Breast epithelium (tissue), 4 donors: ENCODE measurements at regions of chrX and their contacts with region 1.

Region 1: GRCh38 chrX:125295337-125295736 is 24.3 kb upstream of the TEX13C start:
- DNase-seq: no peak
- H3K4me3 ChIP-seq: no peak overlapping the region
- H3K27ac ChIP-seq: no peak overlapping the region
- H3K4me1 ChIP-seq: no peaks in the 10 kb centered on the region
- H3K27me3 ChIP-seq: no peaks in the 10 kb centered on the region
- CTCF ChIP-seq: no peak
- POLR2A ChIP-seq: no peak

Region 2: GRCh38 chrX:124023838-124024238 is 1271.5 kb before region 1 on chrX:
- intact Hi-C with region 1: no loop called
- DNase-seq: no peak
- H3K4me3 ChIP-seq: no peak overlapping the region
- H3K27ac ChIP-seq: no peak overlapping the region
- H3K4me1 ChIP-seq: no peaks in the 10 kb centered on the region
- H3K27me3 ChIP-seq: no peaks in the 10 kb centered on the region
- CTCF ChIP-seq: no peak
- POLR2A ChIP-seq: no peak

Region 3: GRCh38 chrX:125319646-125320521 is 24.5 kb after region 1 on chrX and contains the start of gene TEX13C:
- intact Hi-C with region 1: loop called (anchors 2 kb)
- DNase-seq: no peak
- H3K4me3 ChIP-seq: no peak within 1 kb of the TSS
- H3K27ac ChIP-seq: no peak within 1 kb of the TSS
- H3K4me1 ChIP-seq: no peaks in the 10 kb centered on the region
- H3K27me3 ChIP-seq: no peaks in the 10 kb centered on the region
- CTCF ChIP-seq: no peak
- POLR2A ChIP-seq: no peak
- total RNA-seq, gene TEX13C: not detected